GM12878 (cell line): ENCODE measurements at regions of chr1 and their contacts with region 1.

Region 1: GRCh38 chr1:151993654-151994496 is at the start of gene S100A10:
- DNase-seq: no peak
- ATAC-seq: peak; percentile 66
- H3K4me3 ChIP-seq: peak within 1 kb of the TSS; percentile 47; the same call in 1 of the 2 replicates
- H3K27ac ChIP-seq: no peak within 1 kb of the TSS
- H3K4me1 ChIP-seq: peaks cover 11% of the 10 kb centered on the region; the same call in 1 of the 2 replicates
- H3K27me3 ChIP-seq: peaks cover 17 to 37% of the 10 kb centered on the region in 2 experiments
- CTCF ChIP-seq: no peak
- EP300 ChIP-seq: no peak
- POLR2A ChIP-seq: no peak
- RAD21 ChIP-seq: no peak
- polyA plus RNA-seq, gene S100A10: 0.18 to 0.50 TPM

Region 2: DNA sequence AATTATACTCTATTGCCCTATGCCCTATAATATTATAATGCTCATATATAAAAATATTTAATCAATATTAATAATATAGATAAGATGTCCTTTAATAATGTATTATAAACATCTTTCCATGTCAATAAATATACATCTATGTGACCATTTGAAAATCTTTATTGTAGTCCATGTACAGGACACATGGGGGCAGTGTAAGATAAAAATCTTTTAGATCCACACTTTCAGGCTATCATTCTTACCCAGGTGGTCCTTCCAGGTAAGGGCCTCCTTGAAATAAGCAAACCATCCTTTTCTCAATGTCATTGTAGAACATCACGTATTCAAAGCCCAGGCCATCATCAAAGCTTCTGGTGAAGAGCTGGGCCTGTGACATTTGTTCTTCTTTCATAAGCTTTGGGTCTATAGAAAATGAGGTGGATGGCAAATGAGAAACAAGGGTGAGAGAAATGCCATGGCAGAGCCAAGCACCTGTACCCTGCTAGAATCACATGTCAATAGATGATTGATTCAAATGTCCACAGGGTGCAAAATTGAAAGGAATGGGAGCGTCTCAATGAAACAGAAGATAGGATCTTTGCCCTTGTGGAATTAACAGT is 104.8 kb before region 1 on chr1:
- CTCF ChIA-PET with region 1: interaction called, 4 read pairs
- POLR2A ChIA-PET with region 1: no interaction called
- RAD21 ChIA-PET with region 1: interaction called, 5 read pairs
- SMC1A ChIA-PET with region 1: interaction called, 47 read pairs
- in situ Hi-C with region 1: loop called (anchors 5 kb)
- intact Hi-C with region 1: loop called (anchors 1 kb)
- DNase-seq: no peak
- ATAC-seq: peak; percentile 61
- H3K4me3 ChIP-seq: no peak overlapping the region
- H3K27ac ChIP-seq: no peak overlapping the region
- H3K4me1 ChIP-seq: no peaks in the 10 kb centered on the region
- H3K27me3 ChIP-seq: no peaks in the 10 kb centered on the region
- CTCF ChIP-seq: peak; percentile 21 to 43 (median 42); a peak in 4 of 6 replicates
- EP300 ChIP-seq: no peak
- POLR2A ChIP-seq: no peak
- RAD21 ChIP-seq: peak; percentile 50

Region 3: DNA sequence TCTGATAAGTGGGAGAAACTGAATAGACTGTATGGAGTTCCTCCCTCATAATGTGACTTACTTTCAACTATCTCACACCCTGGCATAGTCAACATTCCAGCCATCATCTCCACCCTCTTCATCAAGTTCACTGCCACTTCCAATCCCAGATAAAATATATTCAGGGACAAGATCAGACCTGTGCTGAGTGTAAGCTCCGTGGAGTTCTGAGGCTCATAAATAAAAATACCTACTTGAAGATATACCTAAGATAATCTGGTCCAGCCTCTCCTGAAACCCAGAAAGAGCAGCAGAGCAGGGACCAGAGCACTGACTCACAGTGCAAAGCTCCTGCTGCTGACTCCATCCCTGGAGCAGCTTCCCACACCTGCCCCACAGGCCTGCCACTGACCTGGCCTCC is 864.2 kb after region 1 on chr1:
- CTCF ChIA-PET with region 1: no interaction called
- POLR2A ChIA-PET with region 1: no interaction called
- RAD21 ChIA-PET with region 1: no interaction called
- SMC1A ChIA-PET with region 1: no interaction called
- in situ Hi-C with region 1: no loop called
- intact Hi-C with region 1: no loop called
- DNase-seq: no peak
- ATAC-seq: no peak
- H3K4me3 ChIP-seq: no peak overlapping the region
- H3K27ac ChIP-seq: no peak overlapping the region
- H3K4me1 ChIP-seq: no peaks in the 10 kb centered on the region
- H3K27me3 ChIP-seq: no peaks in the 10 kb centered on the region; a peak in 1 of 4 replicates
- CTCF ChIP-seq: no peak
- EP300 ChIP-seq: no peak
- POLR2A ChIP-seq: no peak
- RAD21 ChIP-seq: no peak